Esophagus muscularis mucosa (tissue), 4 donors: ENCODE measurements at regions of chr1 and their contacts with region 1.

Region 1: DNA sequence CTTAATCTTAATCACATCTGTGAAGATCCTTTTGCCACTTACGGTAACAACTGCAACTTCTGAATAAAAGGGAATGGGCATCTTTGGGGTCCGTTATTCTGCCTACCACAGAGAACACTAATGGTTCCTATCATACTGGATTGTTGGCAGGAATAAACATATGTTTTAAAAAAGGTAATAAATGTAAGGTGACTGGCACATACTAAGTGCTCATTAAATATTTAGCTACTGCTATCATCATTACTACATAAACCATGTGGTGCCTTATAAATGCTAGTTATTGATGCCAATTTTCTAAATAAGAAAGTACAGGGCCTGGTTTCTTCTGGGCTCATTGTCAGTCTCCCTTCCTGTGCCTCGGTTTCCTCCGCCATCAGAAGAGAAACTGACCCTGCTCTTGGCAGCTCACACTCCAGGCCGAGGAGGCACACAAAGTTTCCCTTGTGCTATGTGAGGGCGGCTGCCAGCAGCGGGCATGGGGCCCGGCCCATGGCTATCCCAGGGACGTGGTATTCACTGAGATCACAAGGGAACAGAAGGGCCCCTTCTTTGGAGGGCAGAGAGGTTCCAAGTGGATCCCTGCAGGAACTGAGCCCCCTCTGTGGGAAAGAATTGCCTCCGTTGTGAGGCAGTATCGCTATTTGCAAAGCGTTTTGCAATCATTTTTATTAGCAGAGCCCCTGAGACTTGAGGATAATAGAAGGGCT is 26.2 kb downstream of the NAV1 start:
- DNase-seq: no peak
- H3K4me3 ChIP-seq: no peak overlapping the region
- H3K27ac ChIP-seq: peak overlapping the region in 1 of 4 donors; percentile 40
- H3K4me1 ChIP-seq: peaks cover 56 to 71% (median 64%) of the 10 kb centered on the region in 4 donors
- H3K27me3 ChIP-seq: no peaks in the 10 kb centered on the region
- CTCF ChIP-seq: no peak
- EP300 ChIP-seq: no peak
- POLR2A ChIP-seq: no peak

Region 2: GRCh38 chr1:201376464-201377374 is 188.5 kb before region 1 on chr1:
- intact Hi-C with region 1: no loop called
- DNase-seq: no peak
- H3K4me3 ChIP-seq: no peak overlapping the region
- H3K27ac ChIP-seq: no peak overlapping the region
- H3K4me1 ChIP-seq: peaks cover 0 to 18% (median 0%) of the 10 kb centered on the region in 4 donors
- H3K27me3 ChIP-seq: peaks cover 0 to 42% (median 0%) of the 10 kb centered on the region in 4 donors
- CTCF ChIP-seq: peak in 1 of 3 experiments; percentile 5
- EP300 ChIP-seq: no peak
- POLR2A ChIP-seq: no peak

Region 3: DNA sequence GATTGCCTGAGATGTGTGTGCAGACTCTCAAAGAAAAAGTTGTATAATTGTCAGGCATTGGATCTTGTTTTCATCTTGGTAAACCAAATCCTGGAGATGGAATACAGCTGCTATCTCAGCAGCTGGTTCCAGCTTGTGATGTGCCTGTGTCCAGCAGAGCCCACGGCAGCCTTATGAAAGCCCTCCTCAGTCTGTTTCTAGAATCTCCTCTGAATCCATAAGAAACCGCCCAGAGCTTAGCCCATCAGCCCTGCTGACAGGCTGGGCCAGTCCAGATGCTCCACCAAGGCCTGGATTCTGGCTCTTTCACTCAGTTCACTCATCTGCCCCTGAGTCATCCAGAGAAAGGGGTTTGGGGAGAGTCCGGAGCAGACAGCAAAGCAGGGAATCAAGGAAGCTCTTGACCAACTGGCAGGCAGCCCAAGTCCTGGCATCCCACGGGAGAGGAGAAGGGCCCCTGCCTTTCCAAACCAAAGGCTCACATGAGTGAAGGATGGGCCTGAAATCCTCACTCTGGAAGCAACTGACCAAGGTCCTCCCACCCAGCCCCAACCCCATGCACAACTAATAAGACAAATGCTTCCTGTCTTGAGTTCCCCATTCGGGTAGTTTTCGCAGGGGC is 19.4 kb after region 1 on chr1:
- intact Hi-C with region 1: loop called (anchors 2 kb)
- DNase-seq: no peak
- H3K4me3 ChIP-seq: no peak overlapping the region
- H3K27ac ChIP-seq: peak overlapping the region in 2 of 4 donors; percentile 47 to 52
- H3K4me1 ChIP-seq: peaks cover 22 to 36% (median 30%) of the 10 kb centered on the region in 4 donors
- H3K27me3 ChIP-seq: no peaks in the 10 kb centered on the region
- CTCF ChIP-seq: no peak
- EP300 ChIP-seq: no peak
- POLR2A ChIP-seq: no peak